ENCODE measurements at regions of chr15 and their contacts with region 1.

Region 1: DNA sequence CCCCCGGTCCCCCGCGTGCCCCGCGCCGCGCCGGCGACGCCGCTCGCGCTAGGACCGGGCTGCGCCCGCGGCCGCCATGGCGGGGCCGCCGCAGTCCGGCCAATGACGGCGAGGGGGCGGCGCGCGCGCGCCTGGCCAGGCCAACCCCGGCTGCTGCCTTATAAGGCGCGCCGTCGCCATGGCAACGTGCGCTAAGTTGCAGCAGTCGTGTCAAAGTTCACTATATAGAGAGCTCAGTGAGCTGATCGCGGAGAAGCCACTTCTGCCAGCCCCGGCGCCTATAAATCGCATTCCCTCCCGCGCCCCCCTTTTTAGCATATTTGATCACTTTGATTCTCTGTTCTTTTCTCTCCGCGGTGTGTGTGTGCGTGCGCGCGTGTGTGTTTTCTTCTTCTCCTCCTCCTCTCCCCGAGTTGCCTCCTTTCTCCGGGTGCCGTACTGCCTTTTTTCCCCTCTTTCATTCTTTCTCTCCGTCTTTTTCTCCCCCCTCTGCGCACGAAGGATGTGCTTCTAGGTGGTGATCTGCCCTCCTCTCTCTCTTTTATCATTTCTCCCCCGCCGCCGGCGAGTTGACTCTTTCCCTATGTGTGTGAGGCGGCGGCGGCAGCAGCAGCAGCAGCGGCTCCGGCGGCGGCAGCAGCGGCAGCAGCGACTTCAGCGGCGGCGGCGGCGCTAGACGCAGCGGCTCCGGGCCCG is at the start of gene NR2F2:
- DNase-seq: peak; percentile 65
- H3K4me3 Mint-ChIP-seq: peak within 1 kb of the TSS; percentile 74
- H3K27ac Mint-ChIP-seq: peak within 1 kb of the TSS; percentile 33
- H3K4me1 Mint-ChIP-seq: peaks cover 19% of the 10 kb centered on the region
- H3K27me3 Mint-ChIP-seq: peaks cover 81% of the 10 kb centered on the region
- total RNA-seq, gene NR2F2: not detected

Region 2: GRCh38 chr15:96209285-96209735 is 121.3 kb before region 1 on chr15:
- CTCF ChIA-PET with region 1: no interaction called
- POLR2A ChIA-PET with region 1: no interaction called
- intact Hi-C with region 1: no loop called
- DNase-seq: no peak
- H3K4me3 Mint-ChIP-seq: no peak overlapping the region
- H3K27ac Mint-ChIP-seq: no peak overlapping the region
- H3K4me1 Mint-ChIP-seq: no peaks in the 10 kb centered on the region
- H3K27me3 Mint-ChIP-seq: no peaks in the 10 kb centered on the region

Region 3: GRCh38 chr15:96345560-96346399 is 15.2 kb after region 1 on chr15:
- CTCF ChIA-PET with region 1: no interaction called
- POLR2A ChIA-PET with region 1: no interaction called
- intact Hi-C with region 1: loop called (anchors 2 kb)
- DNase-seq: no peak
- H3K4me3 Mint-ChIP-seq: no peak overlapping the region
- H3K27ac Mint-ChIP-seq: no peak overlapping the region
- H3K4me1 Mint-ChIP-seq: peaks cover 4% of the 10 kb centered on the region
- H3K27me3 Mint-ChIP-seq: peaks cover 88% of the 10 kb centered on the region

Region 4: GRCh38 chr15:96409215-96410138 is 78.9 kb after region 1 on chr15:
- CTCF ChIA-PET with region 1: no interaction called
- POLR2A ChIA-PET with region 1: no interaction called
- intact Hi-C with region 1: loop called (anchors 5 kb)
- DNase-seq: no peak
- H3K4me3 Mint-ChIP-seq: no peak overlapping the region
- H3K27ac Mint-ChIP-seq: no peak overlapping the region
- H3K4me1 Mint-ChIP-seq: peaks cover 2% of the 10 kb centered on the region
- H3K27me3 Mint-ChIP-seq: peaks cover 63% of the 10 kb centered on the region

Region 5: GRCh38 chr15:96789999-96790398 is 459.4 kb after region 1 on chr15:
- CTCF ChIA-PET with region 1: no interaction called
- POLR2A ChIA-PET with region 1: no interaction called
- intact Hi-C with region 1: no loop called
- DNase-seq: no peak
- H3K4me3 Mint-ChIP-seq: no peak overlapping the region
- H3K27ac Mint-ChIP-seq: no peak overlapping the region
- H3K4me1 Mint-ChIP-seq: no peaks in the 10 kb centered on the region
- H3K27me3 Mint-ChIP-seq: no peaks in the 10 kb centered on the region

Region 6: GRCh38 chr15:97234851-97235610 is 904.4 kb after region 1 on chr15:
- CTCF ChIA-PET with region 1: interaction called, 6 read pairs
- POLR2A ChIA-PET with region 1: no interaction called
- intact Hi-C with region 1: loop called (anchors 10 kb)
- DNase-seq: peak; percentile 31
- H3K4me3 Mint-ChIP-seq: no peak overlapping the region
- H3K27ac Mint-ChIP-seq: no peak overlapping the region
- H3K4me1 Mint-ChIP-seq: no peaks in the 10 kb centered on the region
- H3K27me3 Mint-ChIP-seq: no peaks in the 10 kb centered on the region

Measured in activated CD4-positive, alpha-beta memory T cell treated with anti-CD3 and anti-CD28 coated beads for 36 hours (primary cell).